ENCODE measurements at regions of chr4 and their contacts with region 1.

Region 1: GRCh38 chr4:76689241-76689817 is 208.6 kb downstream of the SOWAHB start:
- DNase-seq: peak; percentile 76

Region 2: DNA sequence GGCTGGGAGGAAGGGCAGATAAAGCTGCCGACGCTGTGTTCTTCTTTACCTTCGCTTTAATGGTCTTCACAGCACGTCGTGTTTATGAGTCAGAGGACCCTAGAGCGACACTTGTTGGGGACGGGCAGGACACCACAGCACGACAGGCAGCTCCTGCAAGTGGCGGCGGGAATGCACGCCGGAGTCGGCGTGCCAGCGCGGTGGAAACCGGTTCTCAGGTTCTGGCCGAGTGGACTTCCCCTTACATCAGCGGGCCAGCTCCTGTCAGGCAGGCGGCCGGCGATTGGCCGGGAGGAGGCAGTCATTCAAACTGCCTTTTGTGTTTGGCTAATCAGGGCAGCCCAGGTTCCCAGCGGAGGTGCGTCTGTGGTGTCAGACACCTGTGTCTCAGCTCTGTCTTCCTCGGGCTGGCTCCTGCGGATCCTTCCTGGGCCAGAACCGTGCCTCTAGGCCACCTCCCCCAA is 103.4 kb before region 1 on chr4:
- intact Hi-C with region 1: loop called (anchors 5 kb)
- DNase-seq: peak; percentile 88

Region 3: DNA sequence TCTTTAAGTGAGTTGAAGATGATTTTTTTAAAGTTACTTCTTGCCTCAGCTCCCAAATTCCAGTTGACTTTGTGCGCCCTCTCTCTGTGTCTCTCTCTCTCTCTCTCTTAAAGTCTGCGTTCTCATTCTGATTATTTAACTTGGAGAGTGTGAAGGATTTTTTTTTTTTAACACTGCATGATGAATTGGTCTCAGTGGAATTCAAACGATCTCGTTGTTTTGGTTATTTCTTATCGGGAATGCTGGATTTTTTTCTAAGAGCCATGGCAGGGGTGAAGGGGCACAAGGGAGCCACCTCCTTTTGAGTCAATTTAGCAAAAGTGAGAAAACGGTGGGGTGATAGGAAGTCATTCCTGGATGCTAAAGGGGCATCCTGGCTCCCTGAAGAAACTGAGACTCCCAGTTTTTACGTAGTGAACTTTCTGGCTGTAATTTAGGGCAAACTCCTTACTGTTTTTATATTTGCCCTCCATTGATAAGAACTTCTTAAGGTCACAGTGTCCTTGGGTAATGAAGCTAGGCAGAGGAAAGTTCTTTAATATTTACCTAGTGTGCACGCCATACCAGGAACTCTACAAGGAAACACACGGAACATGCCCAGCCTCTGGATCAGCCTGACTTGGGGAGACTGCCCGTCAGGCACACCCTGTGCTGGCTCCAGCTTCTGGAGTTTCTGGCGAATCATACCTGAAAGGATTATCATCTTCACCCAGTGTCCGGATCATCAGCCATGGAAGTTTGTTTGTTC is 78.0 kb before region 1 on chr4:
- intact Hi-C with region 1: loop called (anchors 5 kb)
- DNase-seq: no peak

Region 4: GRCh38 chr4:76738086-76738931 is 49.0 kb after region 1 on chr4:
- intact Hi-C with region 1: loop called (anchors 5 kb)
- DNase-seq: no peak

Region 5: DNA sequence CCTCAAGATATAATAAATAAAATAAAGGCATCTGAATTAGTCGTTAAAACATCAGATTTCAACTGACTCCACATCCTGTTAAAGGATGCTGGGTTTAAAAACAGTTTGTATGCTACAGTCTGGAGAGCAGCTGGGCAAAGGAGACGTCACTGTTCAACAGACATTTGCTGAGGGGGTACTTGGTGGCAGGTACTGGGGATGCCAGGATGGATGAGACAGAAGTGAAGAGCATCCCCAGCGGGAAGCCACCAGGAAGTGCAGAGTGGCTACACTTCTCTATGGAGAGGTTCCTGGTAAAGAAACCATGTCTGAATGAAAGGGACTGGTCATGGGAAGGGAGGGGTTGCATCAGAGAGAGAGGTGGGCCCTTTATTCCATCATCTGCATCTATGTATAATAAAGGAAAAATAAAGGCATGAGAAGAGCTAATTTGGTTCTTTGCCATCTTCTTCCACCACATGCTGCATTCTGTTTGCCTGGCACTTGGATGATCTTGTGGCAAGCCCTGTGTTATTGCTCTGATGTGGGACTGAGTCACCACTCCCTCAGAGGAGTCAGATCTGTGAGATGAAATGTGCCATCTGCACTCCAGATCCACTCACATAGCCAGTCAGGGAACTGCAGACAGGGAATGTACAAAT is 63.7 kb after region 1 on chr4:
- intact Hi-C with region 1: loop called (anchors 5 kb)
- DNase-seq: no peak

Measured in cardiac septum (tissue), 1 donor.